ENCODE measurements at regions of chr3 and their contacts with region 1.

Region 1: DNA sequence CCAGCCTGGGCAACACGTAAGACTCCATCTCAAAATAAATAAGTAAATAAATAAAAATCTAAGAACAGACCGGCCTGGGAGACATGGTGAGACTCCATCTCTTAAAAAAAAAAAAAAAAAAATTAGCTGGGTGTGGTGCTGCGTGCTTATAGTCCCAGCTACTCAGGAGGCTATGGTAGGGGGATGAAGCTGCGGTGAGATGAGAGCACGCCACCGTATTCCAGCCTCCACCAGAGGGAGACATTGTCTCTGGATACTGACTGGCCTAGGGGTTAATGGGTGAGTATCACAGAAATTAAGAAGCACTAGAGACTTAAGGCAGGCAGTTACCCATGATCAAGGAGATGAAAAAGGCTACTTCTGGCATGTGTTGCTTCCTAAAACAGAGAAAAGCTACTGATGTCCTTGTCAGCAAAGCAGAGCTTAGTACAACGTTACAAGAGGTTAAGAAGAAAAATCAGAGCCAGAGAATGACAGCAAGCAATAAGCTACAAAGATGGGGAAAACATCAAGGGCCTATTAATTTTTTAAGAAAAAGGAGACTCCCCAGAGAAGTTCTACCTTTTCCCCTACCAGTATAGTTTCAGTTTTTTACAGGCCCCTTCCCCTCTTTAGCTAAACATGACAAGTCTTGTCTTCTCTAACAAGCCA is 8.6 kb downstream of the TFRC start:
- DNase-seq: peak; percentile 47 to 61
- H3K4me3 ChIP-seq: no peak overlapping the region
- H3K27ac ChIP-seq: no peak overlapping the region
- H3K4me1 ChIP-seq: no peaks in the 10 kb centered on the region
- H3K27me3 ChIP-seq: no peaks in the 10 kb centered on the region
- CTCF ChIP-seq: peak; percentile 31 to 89 (median 72)
- POLR2A ChIP-seq: no peak

Region 2: DNA sequence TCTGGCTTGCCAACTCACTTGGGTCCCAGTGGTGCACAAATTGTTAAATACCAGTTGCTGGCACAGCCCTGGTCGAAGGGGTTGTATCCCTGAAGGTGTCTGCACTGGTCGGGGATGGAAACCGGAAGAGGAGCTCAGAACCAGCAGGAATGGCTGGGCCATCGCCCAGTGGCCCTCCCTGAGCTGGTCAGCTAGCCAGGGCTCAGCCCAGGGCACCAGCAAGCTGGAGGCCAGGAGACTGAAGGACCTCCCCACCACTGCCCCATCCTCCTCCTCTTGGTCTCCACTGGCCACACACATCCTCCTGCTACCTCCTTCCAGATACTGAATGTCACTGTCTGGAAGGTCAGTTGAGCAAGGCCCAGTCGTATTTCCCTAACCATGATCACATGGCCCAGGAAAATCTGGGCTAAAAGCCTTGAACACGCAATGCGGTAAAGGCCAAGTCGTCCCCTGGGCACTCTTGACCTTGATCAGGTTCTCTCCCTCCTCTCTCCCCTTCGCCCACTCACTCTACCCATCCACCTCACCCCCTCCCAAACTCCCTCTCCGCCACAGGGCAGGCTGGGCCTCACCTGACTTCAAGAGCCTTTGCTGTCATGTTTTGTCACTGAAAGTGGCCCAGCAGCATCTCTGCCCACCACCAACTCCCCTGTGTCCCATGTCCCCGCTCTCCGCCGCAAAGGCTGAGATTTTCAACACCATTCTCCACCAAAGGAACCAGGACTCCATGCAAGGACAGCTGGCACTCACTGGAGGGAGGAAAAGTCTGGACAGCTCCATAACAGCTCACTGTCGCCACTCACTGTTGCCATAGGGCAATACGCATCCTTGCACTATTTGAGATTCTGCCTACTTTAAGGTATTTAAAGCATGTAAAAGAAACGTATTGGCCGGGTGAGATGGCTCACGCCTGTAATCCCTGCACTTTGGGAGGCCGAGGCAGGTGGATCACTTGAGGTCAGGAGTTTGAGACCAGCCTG is 125.7 kb after region 1 on chr3:
- intact Hi-C with region 1: loop called (anchors 5 kb)
- DNase-seq: no peak
- H3K4me3 ChIP-seq: no peak overlapping the region
- H3K27ac ChIP-seq: no peak overlapping the region
- H3K4me1 ChIP-seq: no peaks in the 10 kb centered on the region
- H3K27me3 ChIP-seq: no peaks in the 10 kb centered on the region
- CTCF ChIP-seq: no peak
- POLR2A ChIP-seq: no peak